ENCODE measurements at regions of chr2 and their contacts with region 1.

Region 1: DNA sequence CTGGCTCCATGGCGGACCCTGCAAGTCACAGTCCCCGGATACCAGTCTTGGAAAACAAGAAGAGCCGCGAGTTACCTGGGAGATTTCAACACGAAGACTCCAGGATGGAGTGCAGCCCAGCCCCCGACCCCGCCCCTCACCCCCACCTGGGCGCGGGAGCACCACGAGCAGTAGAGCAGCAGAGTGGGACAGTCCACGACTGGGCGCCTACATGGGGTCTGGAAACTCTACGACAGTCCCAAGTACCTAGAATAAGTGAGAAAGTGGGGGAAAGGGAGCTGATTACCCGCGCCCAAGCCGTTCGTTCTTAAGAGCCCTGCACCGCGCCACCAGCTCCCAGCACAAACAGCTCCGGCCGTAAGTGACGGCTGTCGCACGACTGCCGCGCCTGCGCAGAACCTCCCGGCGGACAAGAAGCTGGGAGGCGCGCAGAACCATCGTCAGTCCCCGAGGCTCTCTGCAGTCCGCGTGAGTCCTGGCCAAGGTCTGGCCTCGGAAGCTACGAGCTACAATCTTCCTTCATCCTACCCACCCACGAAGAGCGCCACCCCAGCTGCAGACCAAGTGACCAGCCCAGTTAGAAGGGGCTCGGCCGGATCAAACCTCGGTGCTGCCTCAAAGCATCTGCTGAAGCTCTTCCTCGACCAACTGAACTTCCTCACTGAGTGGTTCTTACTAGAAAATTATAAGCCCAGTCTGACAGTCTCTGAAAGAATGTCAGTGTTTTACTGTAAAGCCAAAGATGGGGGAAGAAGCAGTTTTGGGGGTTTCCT is at the start of gene DPY30:
- DNase-seq: peak; percentile 87 to 96 (median 93)

Region 2: DNA sequence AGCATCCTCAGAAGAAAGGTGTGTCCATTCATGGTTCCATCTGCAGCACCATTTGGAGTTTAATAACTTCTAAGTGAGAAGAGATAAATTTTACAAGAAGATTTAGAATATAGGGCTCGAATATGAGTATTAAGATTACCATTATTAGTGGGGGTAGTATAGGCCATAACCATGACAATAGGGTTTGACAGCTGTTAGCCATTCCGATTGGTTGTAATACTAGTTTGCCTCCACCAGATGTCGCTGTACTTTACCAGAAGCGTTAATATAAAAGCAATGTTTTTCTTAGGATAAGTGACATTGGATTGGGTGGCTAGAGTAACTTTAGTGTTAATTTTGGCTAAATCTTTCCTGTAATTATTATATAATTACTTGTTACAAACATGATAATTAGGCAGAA is 351.4 kb before region 1 on chr2:
- intact Hi-C with region 1: no loop called
- DNase-seq: no peak

Region 3: GRCh38 chr2:31822587-31822986 is 217.0 kb before region 1 on chr2:
- intact Hi-C with region 1: no loop called
- DNase-seq: no peak

Region 4: GRCh38 chr2:32010670-32011484 is 28.8 kb before region 1 on chr2 and contains the start of gene MEMO1:
- intact Hi-C with region 1: loop called (anchors 2 kb)
- DNase-seq: peak; percentile 80 to 97 (median 94)

Measured in head of caudate nucleus (tissue), 42 donors.